ENCODE measurements at regions of chr6 and their contacts with region 1.

Region 1: DNA sequence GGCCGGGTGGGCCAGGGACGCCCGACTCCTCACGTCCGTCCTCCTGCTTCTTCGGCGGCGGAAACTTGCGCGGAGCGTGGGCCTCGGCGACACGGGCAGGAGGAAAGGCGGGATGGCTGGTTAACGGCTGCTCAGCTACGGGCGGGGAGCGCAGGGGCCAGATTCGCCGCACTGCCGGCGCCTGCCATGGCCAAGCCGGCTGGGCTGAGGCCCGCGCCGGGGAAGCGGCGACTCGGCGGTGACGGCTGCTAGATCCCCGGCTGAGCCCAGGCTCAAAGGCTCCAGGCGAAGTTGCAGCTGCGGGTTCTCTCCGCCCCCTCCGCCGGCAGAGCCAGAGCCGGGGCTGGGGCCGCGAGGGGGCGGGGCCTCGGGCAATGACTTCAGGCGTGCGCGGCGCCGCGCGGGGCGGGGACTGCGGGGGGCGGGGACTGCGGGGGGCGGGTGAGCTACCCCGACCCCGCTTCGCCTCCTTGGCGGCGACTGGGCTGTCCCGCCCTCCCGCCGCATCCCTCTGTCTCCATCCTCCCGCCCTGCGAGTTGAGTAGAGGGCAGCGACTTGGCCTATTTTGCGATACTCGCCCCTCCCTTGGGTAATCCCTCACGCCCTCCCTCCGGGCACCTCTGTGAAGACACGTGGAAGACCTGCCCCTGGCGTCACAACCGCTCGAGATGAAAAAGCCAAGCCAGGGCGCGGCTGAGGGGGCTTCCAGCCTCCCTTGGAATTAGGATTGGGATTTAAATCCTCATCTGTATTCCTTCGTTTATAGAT is at the start of gene CEP85L:
- DNase-seq: peak; percentile 85
- ATAC-seq: peak; percentile 91
- H3K4me3 Mint-ChIP-seq: peak within 1 kb of the TSS; percentile 98
- H3K27ac Mint-ChIP-seq: peak within 1 kb of the TSS; percentile 93
- H3K4me1 Mint-ChIP-seq: peaks cover 22% of the 10 kb centered on the region
- H3K27me3 Mint-ChIP-seq: no peaks in the 10 kb centered on the region
- CTCF ChIP-seq: no peak
- total RNA-seq, gene CEP85L: 14.6 and 21.8 TPM in 2 replicates

Region 2: GRCh38 chr6:117674991-117675657 is 976.3 kb before region 1 on chr6 and contains the start of gene NUS1:
- CTCF ChIA-PET with region 1: no interaction called
- POLR2A ChIA-PET with region 1: no interaction called
- intact Hi-C with region 1: loop called (anchors 5 kb)
- DNase-seq: peak; percentile 97
- ATAC-seq: peak; percentile 98
- H3K4me3 Mint-ChIP-seq: peak within 1 kb of the TSS; percentile 95
- H3K27ac Mint-ChIP-seq: peak within 1 kb of the TSS; percentile 89
- H3K4me1 Mint-ChIP-seq: peaks cover 42% of the 10 kb centered on the region
- H3K27me3 Mint-ChIP-seq: no peaks in the 10 kb centered on the region
- CTCF ChIP-seq: no peak
- total RNA-seq, gene NUS1: 29.1 and 30.6 TPM in 2 replicates

Region 3: DNA sequence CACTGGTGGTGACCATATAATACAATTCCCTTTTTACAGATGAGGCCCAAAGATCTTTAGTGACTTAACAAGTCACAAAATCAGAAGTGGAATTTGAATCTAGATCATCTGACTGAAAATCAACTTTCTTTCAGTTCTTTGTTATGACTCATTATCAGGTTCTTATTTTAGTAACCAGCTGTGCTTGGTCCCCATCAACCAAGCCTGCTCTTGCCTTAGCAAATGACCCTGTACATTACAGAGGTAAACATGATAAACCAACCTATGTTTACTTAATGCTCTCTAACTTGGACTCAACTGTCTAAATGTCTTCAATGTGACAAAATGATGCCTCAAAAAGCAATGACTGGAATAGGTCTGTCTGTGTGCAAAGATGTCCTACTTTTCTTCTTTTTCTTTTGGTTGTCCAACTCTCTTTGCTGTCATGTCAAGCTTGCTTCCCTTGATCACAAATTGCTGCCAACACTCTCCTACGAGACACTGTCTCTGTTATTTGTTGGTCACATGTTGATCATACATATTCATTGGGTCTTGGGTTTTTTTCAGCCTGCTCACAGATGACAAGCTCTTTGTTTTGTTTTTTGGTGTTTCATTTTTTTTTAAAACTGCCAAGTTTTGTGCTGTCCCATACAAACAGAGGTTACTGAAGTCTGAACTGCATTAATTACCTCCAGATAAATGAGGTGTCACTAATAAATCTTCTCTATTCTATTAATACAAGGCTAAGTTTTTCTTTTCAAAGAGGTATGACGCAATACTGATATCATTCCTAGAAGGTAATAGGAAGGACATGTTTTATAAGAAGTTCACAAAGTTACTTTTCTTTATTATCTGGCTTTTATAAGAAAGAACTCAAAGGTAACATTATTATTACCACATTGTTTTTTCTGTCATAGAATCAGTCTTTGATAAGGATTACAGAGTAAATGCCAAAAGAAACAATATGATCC is 165.6 kb before region 1 on chr6:
- CTCF ChIA-PET with region 1: no interaction called
- POLR2A ChIA-PET with region 1: no interaction called
- intact Hi-C with region 1: no loop called
- DNase-seq: no peak
- ATAC-seq: no peak
- H3K4me3 Mint-ChIP-seq: no peak overlapping the region
- H3K27ac Mint-ChIP-seq: no peak overlapping the region
- H3K4me1 Mint-ChIP-seq: no peaks in the 10 kb centered on the region
- H3K27me3 Mint-ChIP-seq: no peaks in the 10 kb centered on the region
- CTCF ChIP-seq: no peak

Region 4: GRCh38 chr6:118724211-118724610 is 72.7 kb after region 1 on chr6:
- CTCF ChIA-PET with region 1: no interaction called
- POLR2A ChIA-PET with region 1: interaction called, 6 read pairs
- intact Hi-C with region 1: loop called (anchors 1 kb)
- DNase-seq: no peak
- ATAC-seq: peak; percentile 74
- H3K4me3 Mint-ChIP-seq: peak overlapping the region; percentile 55
- H3K27ac Mint-ChIP-seq: peak overlapping the region; percentile 80
- H3K4me1 Mint-ChIP-seq: peaks cover 64% of the 10 kb centered on the region
- H3K27me3 Mint-ChIP-seq: no peaks in the 10 kb centered on the region
- CTCF ChIP-seq: no peak

Region 5: DNA sequence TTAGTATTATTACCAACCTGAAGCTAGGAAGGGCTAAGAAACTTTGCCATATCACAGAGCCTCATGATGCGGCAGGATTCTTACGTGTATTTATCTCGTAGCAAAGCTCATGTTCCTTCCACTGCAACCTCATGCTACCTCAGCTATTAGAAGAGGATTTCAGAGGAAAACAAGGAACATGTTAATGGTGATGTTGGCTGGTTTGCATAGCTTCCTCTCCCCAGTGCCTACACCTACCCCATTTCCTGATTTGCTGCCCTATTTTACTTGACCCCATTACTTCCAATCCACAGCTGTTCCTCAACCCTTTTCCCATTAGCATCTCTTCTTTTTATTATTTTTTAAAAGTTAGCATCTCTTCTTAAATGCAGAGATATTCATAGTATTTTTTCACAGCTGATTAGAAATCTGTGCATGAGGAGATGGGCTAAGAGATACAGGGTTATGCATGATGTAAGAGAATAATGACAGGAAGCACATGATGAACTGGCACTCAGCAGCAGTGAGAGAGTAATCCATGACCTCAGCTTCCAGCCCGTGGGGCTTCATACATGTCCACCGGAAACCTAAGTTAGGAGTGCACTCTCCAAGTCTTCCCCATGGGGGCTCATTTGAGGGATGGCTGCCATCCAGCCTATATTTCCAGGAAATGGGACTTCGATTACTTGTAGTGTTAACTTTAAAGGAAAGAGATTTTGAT is 136.4 kb after region 1 on chr6:
- CTCF ChIA-PET with region 1: no interaction called
- POLR2A ChIA-PET with region 1: no interaction called
- intact Hi-C with region 1: no loop called
- DNase-seq: no peak
- ATAC-seq: no peak
- H3K4me3 Mint-ChIP-seq: no peak overlapping the region
- H3K27ac Mint-ChIP-seq: peak overlapping the region; percentile 31
- H3K4me1 Mint-ChIP-seq: peaks cover 24% of the 10 kb centered on the region
- H3K27me3 Mint-ChIP-seq: no peaks in the 10 kb centered on the region
- CTCF ChIP-seq: no peak

Region 6: GRCh38 chr6:118934461-118935330 is 283.2 kb after region 1 on chr6 and contains the start of gene MCM9:
- CTCF ChIA-PET with region 1: no interaction called
- POLR2A ChIA-PET with region 1: interaction called, 3 read pairs
- intact Hi-C with region 1: loop called (anchors 1 kb)
- DNase-seq: peak; percentile 90
- ATAC-seq: peak; percentile 92
- H3K4me3 Mint-ChIP-seq: peak within 1 kb of the TSS; percentile 89
- H3K27ac Mint-ChIP-seq: peak within 1 kb of the TSS; percentile 91
- H3K4me1 Mint-ChIP-seq: peaks cover 32% of the 10 kb centered on the region
- H3K27me3 Mint-ChIP-seq: no peaks in the 10 kb centered on the region
- CTCF ChIP-seq: no peak
- total RNA-seq, gene MCM9: 33.3 and 37.0 TPM in 2 replicates

Region 7: DNA sequence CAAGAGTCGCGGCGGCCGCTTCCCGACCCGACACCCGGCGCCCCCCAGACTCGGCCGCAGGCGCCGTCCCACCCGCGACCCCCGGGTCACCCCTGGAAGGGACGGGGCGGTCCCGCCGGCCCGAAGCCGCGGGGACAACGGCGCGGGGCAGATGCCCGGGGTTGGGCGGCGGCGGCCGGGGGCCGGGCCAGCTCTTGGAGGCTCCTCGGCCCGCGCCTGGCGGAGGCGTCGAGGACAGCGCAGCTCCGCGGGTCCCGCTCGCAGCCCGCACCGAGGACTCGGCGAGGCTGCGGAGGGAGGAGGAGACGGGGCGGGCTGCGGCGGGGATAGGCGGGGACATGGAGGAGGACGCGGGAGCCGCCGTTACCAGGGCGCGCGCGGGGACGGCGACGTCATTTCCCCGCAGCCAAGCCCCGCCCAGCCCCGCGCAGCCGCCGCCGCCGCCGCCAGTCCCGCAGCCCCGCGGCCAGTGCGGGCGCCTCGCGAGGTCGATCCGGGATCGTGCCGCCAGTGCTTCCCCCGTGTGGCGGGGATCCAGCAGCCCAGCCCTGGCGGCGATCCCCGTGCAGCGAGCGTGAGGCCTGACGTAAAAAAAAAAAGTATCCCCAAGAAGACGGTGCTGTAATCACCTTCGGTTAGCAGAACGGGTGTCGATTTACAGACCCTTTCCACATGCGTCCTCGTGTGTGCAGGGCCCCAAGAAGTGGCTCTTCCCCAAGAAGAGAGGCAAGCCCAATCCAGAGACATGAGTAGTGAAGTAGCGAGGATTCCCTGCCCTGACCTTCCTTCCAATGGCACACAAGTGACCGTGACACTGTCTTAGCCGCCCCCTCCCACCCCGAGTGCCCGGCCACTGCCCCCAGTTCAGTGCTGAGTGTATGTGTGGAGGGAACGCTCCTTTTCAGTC is 427.2 kb after region 1 on chr6 and contains the start of gene FAM184A:
- CTCF ChIA-PET with region 1: no interaction called
- POLR2A ChIA-PET with region 1: no interaction called
- intact Hi-C with region 1: loop called (anchors 1 kb)
- DNase-seq: peak; percentile 61
- ATAC-seq: peak; percentile 83
- H3K4me3 Mint-ChIP-seq: peak within 1 kb of the TSS; percentile 93
- H3K27ac Mint-ChIP-seq: no peak within 1 kb of the TSS
- H3K4me1 Mint-ChIP-seq: peaks cover 17% of the 10 kb centered on the region
- H3K27me3 Mint-ChIP-seq: peaks cover 16% of the 10 kb centered on the region
- CTCF ChIP-seq: no peak
- total RNA-seq, gene FAM184A: 0.24 and 1.1 TPM in 2 replicates